HCT116 (cell line): ENCODE measurements at regions of chr16 and their contacts with region 1.

Region 1: GRCh38 chr16:21158208-21159110 is at the start of gene LDAF1:
- DNase-seq: peak; percentile 41
- ATAC-seq: peak; percentile 93
- H3K4me3 ChIP-seq: peak within 1 kb of the TSS; percentile 62 to 74
- H3K27ac ChIP-seq: peak within 1 kb of the TSS; percentile 51
- H3K4me1 ChIP-seq: peaks cover 15 to 27% of the 10 kb centered on the region in 2 experiments
- H3K27me3 ChIP-seq: no peaks in the 10 kb centered on the region
- CTCF ChIP-seq: no peak
- POLR2A ChIP-seq: no peak
- RAD21 ChIP-seq: no peak; the same call in none of the 2 replicates
- total RNA-seq, gene LDAF1: 30.0 TPM

Region 2: GRCh38 chr16:21554795-21555585 is 396.5 kb after region 1 on chr16:
- CTCF ChIA-PET with region 1: no interaction called
- POLR2A ChIA-PET with region 1: no interaction called
- RAD21 ChIA-PET with region 1: no interaction called
- intact Hi-C with region 1: loop called (anchors 2 kb)
- DNase-seq: peak; percentile 53
- ATAC-seq: peak; percentile 93
- H3K4me3 ChIP-seq: peak overlapping the region in 1 of 2 experiments; percentile 19; a peak in 2 of 4 replicates
- H3K27ac ChIP-seq: no peak overlapping the region
- H3K4me1 ChIP-seq: peaks cover 0 to 17% of the 10 kb centered on the region in 2 experiments; a peak in 2 of 4 replicates
- H3K27me3 ChIP-seq: no peaks in the 10 kb centered on the region
- CTCF ChIP-seq: peak; percentile 92 to 97 (median 96)
- POLR2A ChIP-seq: no peak
- RAD21 ChIP-seq: peak; percentile 97

Region 3: GRCh38 chr16:22670551-22671041 is 1512.1 kb after region 1 on chr16:
- CTCF ChIA-PET with region 1: no interaction called
- POLR2A ChIA-PET with region 1: no interaction called
- RAD21 ChIA-PET with region 1: no interaction called
- intact Hi-C with region 1: loop called (anchors 5 kb)
- DNase-seq: peak; percentile 65
- ATAC-seq: peak; percentile 97
- H3K4me3 ChIP-seq: no peak overlapping the region
- H3K27ac ChIP-seq: no peak overlapping the region
- H3K4me1 ChIP-seq: peaks cover 0 to 9% of the 10 kb centered on the region in 2 experiments; a peak in 2 of 4 replicates
- H3K27me3 ChIP-seq: peaks cover 27% of the 10 kb centered on the region
- CTCF ChIP-seq: no peak
- POLR2A ChIP-seq: no peak
- RAD21 ChIP-seq: no peak